GM12878 (cell line): ENCODE measurements at regions of chr13 and their contacts with region 1.

Region 1: GRCh38 chr13:51689663-51689996 is 105.4 kb downstream of the WDFY2 start:
- DNase-seq: no peak
- ATAC-seq: peak; percentile 79
- H3K4me3 ChIP-seq: no peak overlapping the region
- H3K27ac ChIP-seq: peak overlapping the region; percentile 56
- H3K4me1 ChIP-seq: peaks cover 9% of the 10 kb centered on the region
- H3K27me3 ChIP-seq: no peaks in the 10 kb centered on the region
- CTCF ChIP-seq: no peak
- EP300 ChIP-seq: no peak
- POLR2A ChIP-seq: no peak
- RAD21 ChIP-seq: no peak

Region 2: DNA sequence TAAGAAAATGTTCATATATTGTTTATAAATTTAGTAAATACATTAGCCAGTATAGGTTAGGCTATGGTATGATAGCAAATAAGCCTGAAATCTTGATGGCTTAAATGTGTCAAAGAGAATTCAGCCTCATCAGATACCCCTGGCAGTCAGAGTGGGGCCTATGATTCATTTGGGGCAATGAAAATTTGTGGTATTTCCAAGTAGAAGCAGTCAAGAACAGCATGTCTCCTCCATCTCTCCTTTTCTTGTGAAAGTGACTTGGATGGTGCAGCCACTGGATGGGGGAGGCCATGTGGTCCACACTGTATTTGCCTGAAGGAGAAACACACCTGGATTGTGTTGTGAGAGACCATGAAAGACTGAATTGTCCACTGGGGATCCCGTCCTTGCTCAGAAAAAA is 928.9 kb before region 1 on chr13:
- CTCF ChIA-PET with region 1: no interaction called
- POLR2A ChIA-PET with region 1: no interaction called
- RAD21 ChIA-PET with region 1: no interaction called
- SMC1A ChIA-PET with region 1: no interaction called
- in situ Hi-C with region 1: no loop called
- intact Hi-C with region 1: no loop called
- DNase-seq: no peak
- ATAC-seq: no peak
- H3K4me3 ChIP-seq: no peak overlapping the region
- H3K27ac ChIP-seq: no peak overlapping the region
- H3K4me1 ChIP-seq: no peaks in the 10 kb centered on the region
- H3K27me3 ChIP-seq: no peaks in the 10 kb centered on the region
- CTCF ChIP-seq: no peak
- EP300 ChIP-seq: no peak
- POLR2A ChIP-seq: no peak
- RAD21 ChIP-seq: no peak

Region 3: DNA sequence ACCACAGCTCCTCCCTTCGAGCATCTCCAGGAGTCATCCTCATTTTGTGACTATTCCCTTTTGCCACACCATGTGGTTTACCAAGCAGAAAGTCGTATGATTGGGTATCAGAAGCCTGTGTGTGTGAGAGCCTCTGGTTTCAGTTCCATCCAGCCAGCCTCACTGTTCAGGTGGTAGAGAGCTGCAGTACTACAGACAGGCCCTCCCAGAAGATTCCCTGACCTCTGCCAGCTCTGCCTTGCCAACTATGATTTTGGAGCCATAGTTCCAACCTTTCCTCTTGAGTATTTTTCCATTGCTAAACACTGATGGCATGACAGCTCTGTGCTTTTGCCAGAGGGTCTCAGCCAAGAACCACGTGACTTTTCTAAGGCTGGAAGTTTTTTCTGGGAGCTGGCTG is 31.9 kb after region 1 on chr13:
- CTCF ChIA-PET with region 1: no interaction called
- POLR2A ChIA-PET with region 1: no interaction called
- RAD21 ChIA-PET with region 1: interaction called, 4 read pairs
- SMC1A ChIA-PET with region 1: interaction called, 12 read pairs
- in situ Hi-C with region 1: no loop called
- intact Hi-C with region 1: no loop called
- DNase-seq: peak; percentile 53
- ATAC-seq: peak; percentile 95
- H3K4me3 ChIP-seq: no peak overlapping the region
- H3K27ac ChIP-seq: peak overlapping the region; percentile 72
- H3K4me1 ChIP-seq: peaks cover 15% of the 10 kb centered on the region
- H3K27me3 ChIP-seq: no peaks in the 10 kb centered on the region
- CTCF ChIP-seq: no peak
- EP300 ChIP-seq: no peak
- POLR2A ChIP-seq: no peak
- RAD21 ChIP-seq: no peak

Region 4: DNA sequence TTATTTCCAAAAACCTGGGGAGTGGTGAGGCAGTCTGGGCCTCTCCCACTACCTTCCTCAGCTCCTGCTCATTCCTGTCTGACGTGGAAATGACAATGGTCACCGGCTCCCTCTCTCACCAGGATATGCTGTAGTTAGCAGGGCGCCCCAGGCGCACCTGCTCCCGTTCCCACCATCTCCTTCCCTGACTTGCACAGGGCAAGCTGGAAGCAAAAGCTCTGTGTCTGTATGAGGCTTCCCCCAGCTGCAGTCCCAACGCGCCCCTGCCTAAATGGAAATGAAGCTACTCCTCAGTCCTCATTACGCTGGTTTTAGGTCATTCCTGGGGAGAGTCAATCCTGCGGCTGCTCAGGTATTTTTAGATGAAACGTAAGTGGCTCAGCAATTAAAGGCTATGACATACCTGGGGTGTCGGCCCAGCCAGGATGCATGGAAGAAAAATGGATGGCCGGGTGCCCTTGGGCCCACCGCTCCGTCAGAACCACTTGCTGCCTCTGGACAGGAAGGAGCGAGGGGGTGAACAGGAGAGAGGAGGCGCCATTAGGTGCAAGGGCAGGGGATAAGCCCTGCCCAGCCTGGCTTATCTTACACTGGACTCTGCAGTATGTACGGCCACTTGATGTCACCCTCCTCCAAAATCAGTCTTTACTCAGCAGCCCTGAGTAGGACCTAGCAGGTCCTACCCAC is 81.9 kb after region 1 on chr13:
- CTCF ChIA-PET with region 1: no interaction called
- POLR2A ChIA-PET with region 1: no interaction called
- RAD21 ChIA-PET with region 1: no interaction called
- SMC1A ChIA-PET with region 1: no interaction called
- in situ Hi-C with region 1: no loop called
- intact Hi-C with region 1: no loop called
- DNase-seq: no peak
- ATAC-seq: no peak; the same call in 2 of the 3 replicates
- H3K4me3 ChIP-seq: no peak overlapping the region
- H3K27ac ChIP-seq: no peak overlapping the region
- H3K4me1 ChIP-seq: no peaks in the 10 kb centered on the region
- H3K27me3 ChIP-seq: no peaks in the 10 kb centered on the region
- CTCF ChIP-seq: no peak
- EP300 ChIP-seq: no peak
- POLR2A ChIP-seq: peak; percentile 39; the same call in 1 of the 2 replicates
- RAD21 ChIP-seq: no peak

Region 5: GRCh38 chr13:52194184-52194868 is 504.7 kb after region 1 on chr13:
- CTCF ChIA-PET with region 1: no interaction called
- POLR2A ChIA-PET with region 1: no interaction called
- RAD21 ChIA-PET with region 1: no interaction called
- SMC1A ChIA-PET with region 1: no interaction called
- in situ Hi-C with region 1: no loop called
- intact Hi-C with region 1: no loop called
- DNase-seq: peak; percentile 60
- ATAC-seq: peak; percentile 83
- H3K4me3 ChIP-seq: peak overlapping the region; percentile 94
- H3K27ac ChIP-seq: peak overlapping the region; percentile 54
- H3K4me1 ChIP-seq: no peaks in the 10 kb centered on the region
- H3K27me3 ChIP-seq: no peaks in the 10 kb centered on the region
- CTCF ChIP-seq: no peak
- EP300 ChIP-seq: no peak
- POLR2A ChIP-seq: peak; percentile 92
- RAD21 ChIP-seq: no peak